Psoas muscle (tissue), 8 donors: ENCODE measurements at regions of chr2 and their contacts with region 1.

Region 1: DNA sequence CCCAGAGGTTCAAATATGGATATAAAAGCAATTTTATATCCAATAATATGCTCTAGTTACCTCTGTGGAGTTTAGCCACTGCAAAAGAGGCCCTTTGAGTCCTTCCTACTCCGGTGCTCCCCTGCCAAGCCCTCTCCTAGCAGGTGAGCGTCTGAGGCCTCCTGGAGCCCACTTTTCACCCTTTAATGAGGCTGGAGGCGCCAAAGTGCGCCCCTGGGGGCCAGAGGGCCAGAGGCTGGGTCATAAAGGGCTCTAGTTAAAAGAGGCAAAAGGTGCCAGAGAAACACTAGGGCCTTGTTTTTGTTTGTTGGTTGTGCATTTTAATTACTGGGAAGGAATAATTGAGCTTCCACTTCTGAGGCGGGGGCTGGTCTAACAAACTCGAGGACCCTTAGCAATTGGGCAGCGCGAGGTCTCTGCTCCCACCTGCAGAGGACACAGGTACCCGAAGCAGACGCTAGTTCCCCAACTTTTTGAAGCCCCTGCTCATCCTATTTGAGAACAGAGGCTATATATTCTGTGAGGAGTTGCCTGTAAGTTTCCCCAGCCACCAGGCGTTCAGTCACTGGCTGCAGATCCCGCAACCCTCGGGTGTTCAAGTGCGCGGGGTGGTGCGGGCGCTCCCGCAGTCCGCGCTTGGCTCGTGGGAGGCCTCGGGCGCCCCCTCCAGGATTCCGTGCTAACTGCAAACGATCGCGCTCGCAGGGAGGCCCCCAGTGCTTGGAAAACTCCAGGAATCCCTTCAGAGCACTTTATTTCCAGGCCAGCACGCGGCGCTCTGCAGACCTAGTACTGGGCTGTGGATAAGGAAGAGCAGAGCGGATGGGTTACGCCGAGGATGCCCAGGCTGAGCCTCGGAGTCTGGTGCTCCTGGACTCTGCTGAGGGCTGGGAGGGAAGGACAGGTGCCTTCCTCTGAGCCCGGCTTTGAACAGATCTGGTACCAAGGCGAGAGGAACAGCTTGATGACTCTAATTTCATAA is 14.1 kb downstream of the MSGN1 start:
- DNase-seq: peak; percentile 63 to 85
- ATAC-seq: peak; percentile 94 to 99 (median 96)
- H3K4me3 ChIP-seq: peak overlapping the region; percentile 50
- H3K27ac ChIP-seq: no peak overlapping the region
- H3K4me1 ChIP-seq: no peaks in the 10 kb centered on the region
- H3K27me3 ChIP-seq: no peaks in the 10 kb centered on the region
- CTCF ChIP-seq: peak; percentile 88

Region 2: GRCh38 chr2:17719562-17720371 is 110.6 kb before region 1 on chr2:
- intact Hi-C with region 1: loop called (anchors 2 to 5 kb)
- DNase-seq: no peak
- ATAC-seq: peak in 1 of 4 donors; percentile 56
- H3K4me3 ChIP-seq: no peak overlapping the region
- H3K27ac ChIP-seq: no peak overlapping the region
- H3K4me1 ChIP-seq: no peaks in the 10 kb centered on the region
- H3K27me3 ChIP-seq: no peaks in the 10 kb centered on the region
- CTCF ChIP-seq: peak; percentile 83

Region 3: DNA sequence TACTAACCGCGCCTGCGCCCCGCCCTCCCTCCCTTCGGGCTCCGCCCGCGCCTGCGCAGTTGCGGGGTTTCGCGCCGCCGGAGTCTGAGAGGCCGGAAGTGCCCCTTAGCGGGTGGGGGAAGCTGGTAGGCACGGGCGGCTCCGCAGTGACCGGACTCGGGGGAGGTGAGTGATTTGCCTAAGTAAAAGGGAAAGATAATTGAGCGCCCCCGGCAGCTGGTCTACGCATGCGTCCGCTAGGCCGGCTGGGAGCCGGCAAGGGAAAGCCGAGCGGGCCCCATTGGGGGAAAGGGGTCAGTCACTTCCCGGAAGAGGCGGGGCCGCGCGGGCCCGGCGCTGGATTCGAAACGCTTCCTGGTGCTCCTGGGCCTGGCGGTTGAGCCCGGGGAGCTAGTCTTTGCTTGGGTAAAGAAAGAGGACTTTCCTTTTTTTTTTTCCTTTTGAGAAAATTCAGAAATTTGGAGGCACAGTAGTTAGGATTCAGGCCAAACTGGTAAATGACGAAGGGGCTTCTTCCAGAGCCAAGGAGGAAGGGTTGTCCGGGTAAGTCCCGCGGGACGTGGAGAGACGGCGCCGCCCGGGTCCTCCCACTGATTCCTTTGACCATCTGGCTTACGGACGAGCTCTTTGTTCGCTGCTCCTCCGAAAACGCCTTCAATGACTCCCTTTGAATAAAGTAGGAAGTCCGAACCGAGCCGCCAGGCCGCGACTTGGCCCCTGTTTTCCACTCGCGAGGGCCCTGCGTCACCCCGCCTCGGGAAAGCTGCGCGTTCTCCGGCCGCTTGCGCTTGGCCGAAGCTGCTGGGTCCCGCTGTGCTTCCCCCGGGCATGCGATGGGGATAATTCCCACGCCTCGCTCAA is 76.3 kb before region 1 on chr2 and contains the starts of genes GEN1 and SMC6:
- intact Hi-C with region 1: loop called (anchors 2 kb)
- DNase-seq: peak; percentile 90 to 95
- ATAC-seq: peak; percentile 97 to 99 (median 98)
- H3K4me3 ChIP-seq: peak within 1 kb of the TSS; percentile 92
- H3K27ac ChIP-seq: peak within 1 kb of the TSS; percentile 97
- H3K4me1 ChIP-seq: peaks cover 20% of the 10 kb centered on the region
- H3K27me3 ChIP-seq: no peaks in the 10 kb centered on the region
- CTCF ChIP-seq: no peak
- total RNA-seq, gene GEN1: 1.3 to 3.0 (median 2.3) TPM
- total RNA-seq, gene SMC6: 6.5 to 10.2 (median 9.4) TPM

Region 4: GRCh38 chr2:18117592-18117991 is 287.2 kb after region 1 on chr2:
- intact Hi-C with region 1: no loop called
- DNase-seq: peak in 1 of 2 donors; percentile 51
- ATAC-seq: peak; percentile 53 to 80 (median 68)
- H3K4me3 ChIP-seq: no peak overlapping the region
- H3K27ac ChIP-seq: no peak overlapping the region
- H3K4me1 ChIP-seq: peaks cover 11% of the 10 kb centered on the region
- H3K27me3 ChIP-seq: no peaks in the 10 kb centered on the region
- CTCF ChIP-seq: peak; percentile 55

Region 5: DNA sequence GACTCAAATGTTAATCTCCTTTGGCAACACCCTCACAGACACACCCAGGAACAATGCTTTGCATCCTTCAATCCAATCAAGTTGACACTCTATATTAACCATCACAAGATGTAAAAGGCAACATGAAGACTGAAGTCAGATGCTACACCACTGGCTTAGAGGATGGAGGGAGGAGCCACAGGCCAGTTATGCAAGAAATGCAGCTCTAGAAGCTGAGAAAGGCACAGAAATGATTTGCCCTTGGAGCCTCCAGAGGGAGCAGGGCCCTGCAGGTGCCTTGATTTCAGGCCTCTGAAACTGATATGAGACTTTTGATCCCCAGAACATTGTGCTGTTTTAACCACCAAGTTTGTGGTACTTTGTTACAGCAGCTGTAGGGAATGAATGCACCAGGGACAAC is 324.5 kb after region 1 on chr2:
- intact Hi-C with region 1: no loop called
- DNase-seq: no peak
- ATAC-seq: peak in 1 of 4 donors; percentile 25
- H3K4me3 ChIP-seq: no peak overlapping the region
- H3K27ac ChIP-seq: peak overlapping the region; percentile 75
- H3K4me1 ChIP-seq: peaks cover 14% of the 10 kb centered on the region
- H3K27me3 ChIP-seq: no peaks in the 10 kb centered on the region
- CTCF ChIP-seq: no peak